Aorta (tissue), 5 donors: ENCODE measurements at regions of chr2 and their contacts with region 1.

Region 1: DNA sequence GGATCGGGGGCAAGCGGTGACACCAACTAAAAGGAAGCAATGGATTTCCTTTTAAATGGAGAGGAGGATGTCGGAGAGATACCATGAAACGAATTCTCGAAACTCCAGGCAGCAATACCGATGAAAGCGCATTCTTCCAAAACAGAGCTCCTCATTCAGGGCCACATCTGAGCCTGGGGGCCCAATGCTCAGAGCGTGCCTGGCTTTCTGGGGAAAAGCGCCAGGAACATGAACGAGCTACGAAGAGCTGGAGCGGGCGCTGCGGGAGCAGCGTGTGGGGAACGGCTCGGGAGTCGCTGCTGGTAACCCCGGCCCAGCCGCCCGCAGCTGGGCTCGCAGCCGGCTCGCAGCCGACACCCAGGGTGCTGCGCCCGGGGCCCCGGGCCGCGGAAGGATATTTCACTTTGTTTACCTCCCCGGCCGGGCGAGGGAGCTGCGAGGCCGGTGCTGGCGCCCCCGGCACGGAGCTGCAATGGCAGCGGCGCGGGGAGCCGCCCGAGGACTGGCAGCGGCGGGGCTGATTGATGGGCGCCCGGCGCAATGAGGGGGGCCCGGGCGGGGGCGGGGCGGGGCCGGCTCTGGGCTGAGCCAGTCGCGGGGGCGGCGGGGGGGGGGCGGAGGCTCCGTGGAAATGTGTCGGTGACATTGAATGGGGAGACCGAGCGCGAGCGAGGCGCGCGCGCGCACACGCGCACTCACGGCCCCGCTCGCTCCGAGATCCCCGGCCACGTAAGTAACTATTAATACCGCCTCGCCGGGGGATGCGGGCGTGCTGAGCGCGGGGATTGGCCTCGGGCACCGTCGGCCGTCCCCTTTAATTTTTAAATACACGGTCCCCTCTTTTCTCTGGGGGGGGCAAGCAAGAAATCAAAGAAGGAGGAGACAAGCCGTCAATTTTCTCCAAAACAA is at the start of gene TRIB2:
- DNase-seq: peak; percentile 91 to 94
- ATAC-seq: peak; percentile 80
- H3K4me3 ChIP-seq: peak within 1 kb of the TSS; percentile 92 to 95
- H3K27ac ChIP-seq: peak within 1 kb of the TSS; percentile 90 to 92
- H3K4me1 ChIP-seq: no peaks in the 10 kb centered on the region
- H3K27me3 ChIP-seq: no peaks in the 10 kb centered on the region
- total RNA-seq, gene TRIB2: 39.7 to 63.4 TPM

Region 2: GRCh38 chr2:11863513-11864328 is 852.8 kb before region 1 on chr2:
- intact Hi-C with region 1: loop called (anchors 5 kb)
- DNase-seq: peak; percentile 92 to 94
- ATAC-seq: peak; percentile 94
- H3K4me3 ChIP-seq: no peak overlapping the region
- H3K27ac ChIP-seq: no peak overlapping the region
- H3K4me1 ChIP-seq: no peaks in the 10 kb centered on the region
- H3K27me3 ChIP-seq: no peaks in the 10 kb centered on the region

Region 3: GRCh38 chr2:12416600-12416999 is 299.9 kb before region 1 on chr2:
- intact Hi-C with region 1: loop called in 1 of 2 experiments (anchors 5 kb)
- DNase-seq: peak; percentile 68 to 87
- ATAC-seq: peak; percentile 54
- H3K4me3 ChIP-seq: no peak overlapping the region
- H3K27ac ChIP-seq: no peak overlapping the region
- H3K4me1 ChIP-seq: peaks cover 0 to 3% of the 10 kb centered on the region in 2 donors
- H3K27me3 ChIP-seq: no peaks in the 10 kb centered on the region

Region 4: DNA sequence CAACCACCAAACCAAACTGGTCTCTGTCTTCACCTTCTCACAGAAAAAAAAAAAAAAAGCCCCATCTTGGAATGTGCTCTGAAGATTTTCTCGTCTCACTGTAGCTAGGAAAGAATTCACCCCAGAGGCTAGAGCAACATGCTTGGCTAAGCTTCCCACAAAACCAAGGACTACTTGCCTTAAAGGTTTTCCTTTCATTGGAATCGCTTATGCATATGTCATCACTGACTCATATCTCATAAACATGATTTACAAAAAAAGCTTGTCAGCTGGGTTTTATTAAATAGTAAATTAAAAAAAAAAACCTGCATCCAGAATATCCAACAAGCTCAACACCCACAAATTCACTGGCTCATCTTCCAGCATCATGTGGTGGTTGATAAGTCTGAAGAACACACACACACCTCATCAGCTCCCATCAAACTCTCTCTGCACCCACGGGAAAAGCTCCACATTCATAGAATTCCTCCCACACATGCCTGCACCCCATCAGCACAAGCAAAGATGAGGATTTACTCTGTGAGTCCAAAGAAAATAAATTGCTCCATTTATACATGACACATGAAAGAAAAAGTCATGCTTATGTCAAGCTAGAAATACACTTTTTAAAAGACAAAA is 181.8 kb before region 1 on chr2:
- intact Hi-C with region 1: loop called in 1 of 2 experiments (anchors 5 kb)
- DNase-seq: peak in 1 of 2 donors; percentile 46
- ATAC-seq: peak; percentile 56
- H3K4me3 ChIP-seq: no peak overlapping the region
- H3K27ac ChIP-seq: peak overlapping the region; percentile 11 to 71
- H3K4me1 ChIP-seq: peaks cover 6 to 11% of the 10 kb centered on the region in 2 donors
- H3K27me3 ChIP-seq: no peaks in the 10 kb centered on the region

Region 5: DNA sequence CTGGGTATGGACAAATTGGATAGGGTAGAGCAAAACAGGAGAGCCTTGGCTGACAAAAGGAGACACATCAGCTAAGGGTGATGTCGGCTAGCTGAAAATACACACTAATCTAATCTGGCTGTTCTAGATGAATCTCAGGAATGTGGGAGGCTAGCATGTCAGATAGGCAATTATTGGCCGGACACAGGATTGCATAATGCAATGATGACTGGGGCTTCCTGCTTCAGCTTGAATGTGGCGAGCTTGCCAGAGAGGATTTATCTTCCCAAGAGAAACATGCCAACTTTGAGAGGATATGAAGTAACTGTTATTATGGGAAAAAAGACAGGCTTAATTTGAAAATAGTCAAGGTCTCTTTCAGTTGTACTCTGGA is 102.6 kb after region 1 on chr2:
- intact Hi-C with region 1: loop called (anchors 5 to 10 kb)
- DNase-seq: peak in 1 of 2 donors; percentile 83
- ATAC-seq: peak; percentile 93
- H3K4me3 ChIP-seq: no peak overlapping the region
- H3K27ac ChIP-seq: peak overlapping the region in 1 of 2 donors; percentile 33
- H3K4me1 ChIP-seq: peaks cover 0 to 2% of the 10 kb centered on the region in 2 donors
- H3K27me3 ChIP-seq: no peaks in the 10 kb centered on the region

Region 6: DNA sequence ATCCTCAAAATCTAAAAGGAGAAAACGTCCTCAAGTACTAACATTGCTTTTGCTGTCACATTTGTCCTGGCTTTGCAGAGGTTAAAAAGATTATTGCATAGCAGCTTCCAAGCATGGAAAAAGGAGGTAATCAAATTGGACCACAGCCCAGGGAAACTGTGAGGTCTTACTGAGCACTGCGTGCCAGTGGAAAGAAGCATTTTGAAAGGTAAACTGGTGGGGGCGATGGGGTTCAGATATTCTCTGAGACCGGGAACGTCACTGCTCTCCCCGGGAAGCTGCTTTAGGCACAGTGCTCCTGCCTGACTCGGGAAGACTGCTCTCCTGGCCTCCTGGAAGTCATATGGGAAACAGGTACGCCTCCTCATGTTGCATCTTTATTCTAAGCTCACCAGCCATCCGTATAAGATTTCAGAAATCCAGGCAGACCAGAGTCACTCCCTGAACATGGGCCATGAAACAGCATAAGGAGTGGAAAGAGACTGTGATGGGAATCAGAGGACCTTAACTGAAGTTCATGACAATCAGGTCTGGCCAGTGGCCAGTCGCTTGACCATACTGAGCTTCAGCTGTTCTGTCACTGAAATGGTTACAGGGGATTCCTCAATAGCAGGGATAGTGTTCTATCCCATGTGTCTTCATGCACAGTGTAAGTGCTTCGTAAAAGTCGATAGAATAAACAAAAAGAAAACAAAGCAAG is 284.3 kb after region 1 on chr2:
- intact Hi-C with region 1: loop called in 1 of 2 experiments (anchors 5 kb)
- DNase-seq: no peak
- ATAC-seq: peak; percentile 63
- H3K4me3 ChIP-seq: no peak overlapping the region
- H3K27ac ChIP-seq: no peak overlapping the region
- H3K4me1 ChIP-seq: peaks cover 0 to 2% of the 10 kb centered on the region in 2 donors
- H3K27me3 ChIP-seq: no peaks in the 10 kb centered on the region